Activated naive CD4-positive, alpha-beta T cell treated with anti-CD3 and anti-CD28 coated beads, Interleukin-2, amount 10 ng/mL, durations not matched to agents 7 days and 5 days (primary cell): ENCODE measurements at regions of chr16 and their contacts with region 1.

Region 1: DNA sequence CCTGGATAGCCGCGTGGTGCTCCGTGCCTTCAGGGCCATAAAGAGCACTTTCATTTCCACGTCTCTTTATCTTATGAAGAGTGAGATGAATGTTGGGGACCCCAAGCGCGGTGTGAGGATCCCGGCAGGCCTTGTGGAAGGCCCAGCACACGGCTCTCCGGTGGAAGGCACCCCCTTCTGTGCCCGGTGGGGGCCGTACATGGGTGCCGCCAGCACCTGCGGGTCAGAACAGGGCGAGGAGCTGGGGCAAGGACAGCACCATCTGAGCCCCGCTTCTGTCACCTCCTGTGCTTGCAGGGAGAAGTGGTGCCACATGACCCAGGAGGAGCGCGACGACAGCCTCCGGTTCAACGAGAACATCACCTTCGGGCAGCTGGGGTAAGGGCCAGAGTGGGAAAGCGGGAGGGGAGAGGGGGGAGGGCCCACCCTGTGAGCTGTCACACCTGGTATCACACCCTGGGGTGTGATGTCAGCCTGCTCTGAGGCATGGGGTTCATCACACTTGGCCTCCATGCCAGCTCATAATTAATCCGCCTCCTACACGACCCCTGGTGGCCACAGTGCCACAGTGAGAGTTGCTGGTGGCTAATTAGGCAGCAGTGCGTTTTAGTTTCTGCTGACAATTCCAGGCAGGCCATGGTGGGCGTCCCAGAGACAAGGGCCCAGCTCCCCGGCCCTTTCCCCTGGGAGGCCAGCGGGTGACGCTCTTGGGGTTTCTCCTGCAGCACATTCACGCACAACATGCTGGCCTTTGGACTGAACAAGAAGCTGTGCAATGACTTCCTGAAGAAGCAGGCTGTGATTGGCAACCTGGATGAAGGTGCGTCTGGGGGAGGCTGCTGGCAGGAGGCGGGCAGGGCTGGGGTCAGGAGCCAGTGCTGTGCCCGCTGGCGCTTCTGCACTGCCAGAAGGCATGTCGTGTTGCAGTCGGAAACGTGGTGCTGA is 25.7 kb downstream of the CIBAR2 start:
- DNase-seq: peak; percentile 87
- H3K4me3 Mint-ChIP-seq: no peak overlapping the region
- H3K27ac Mint-ChIP-seq: peak overlapping the region; percentile 33
- H3K4me1 Mint-ChIP-seq: peaks cover 22% of the 10 kb centered on the region
- H3K27me3 Mint-ChIP-seq: peaks cover 10% of the 10 kb centered on the region

Region 2: GRCh38 chr16:85027349-85027957 is 59.2 kb before region 1 on chr16 and contains the start of gene KIAA0513:
- CTCF ChIA-PET with region 1: interaction called, 23 read pairs
- DNase-seq: peak; percentile 96
- H3K4me3 Mint-ChIP-seq: peak within 1 kb of the TSS; percentile 87
- H3K27ac Mint-ChIP-seq: peak within 1 kb of the TSS; percentile 94
- H3K4me1 Mint-ChIP-seq: peaks cover 42% of the 10 kb centered on the region
- H3K27me3 Mint-ChIP-seq: peaks cover 3% of the 10 kb centered on the region

Region 3: DNA sequence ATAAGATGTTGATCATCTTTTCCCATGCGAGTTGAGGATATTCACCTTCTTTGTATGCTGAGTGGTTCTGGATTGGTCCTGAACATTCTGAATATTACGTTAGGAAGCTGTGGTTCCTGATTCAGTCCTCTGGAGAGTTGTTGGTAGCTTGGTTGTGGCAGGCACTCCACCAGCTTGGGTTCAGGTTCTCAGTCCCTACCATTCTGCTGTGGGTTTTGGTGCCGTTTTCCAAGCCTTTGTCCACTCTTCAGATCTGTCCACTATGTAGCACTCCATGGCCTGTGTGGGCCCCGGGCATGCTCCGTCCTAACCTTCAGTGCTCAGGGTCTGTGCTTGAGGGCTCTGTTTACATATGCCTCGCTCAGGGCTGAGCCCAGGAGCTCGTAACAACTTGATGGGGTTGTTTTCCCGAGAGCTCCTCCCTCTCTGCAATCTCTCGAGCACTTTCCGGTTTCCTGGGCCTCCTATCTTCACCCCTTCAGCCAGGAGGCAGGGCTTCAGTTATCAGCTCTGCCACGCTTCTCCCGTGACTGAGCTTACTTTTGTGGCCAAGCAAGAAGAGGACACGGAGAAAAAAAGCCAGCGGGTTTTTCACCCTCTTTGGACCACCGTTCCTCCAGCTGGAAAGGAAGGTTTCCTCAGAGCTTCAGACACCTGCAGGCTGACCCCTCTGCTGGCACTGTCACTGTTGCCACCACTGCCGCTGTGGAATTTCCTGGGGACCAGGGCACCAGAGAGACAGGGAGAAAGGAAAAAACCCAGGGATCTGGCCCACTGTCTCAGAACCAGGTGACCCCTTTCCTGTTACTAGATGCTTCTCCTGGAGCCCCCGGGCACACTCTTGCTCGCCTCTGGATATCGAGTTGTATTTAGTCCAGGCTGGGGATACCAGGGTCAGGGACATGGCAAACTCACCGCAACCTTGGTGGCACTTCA is 39.4 kb before region 1 on chr16:
- CTCF ChIA-PET with region 1: interaction called, 11 read pairs
- DNase-seq: peak; percentile 53
- H3K4me3 Mint-ChIP-seq: peak overlapping the region; percentile 24
- H3K27ac Mint-ChIP-seq: peak overlapping the region; percentile 77
- H3K4me1 Mint-ChIP-seq: peaks cover 20% of the 10 kb centered on the region
- H3K27me3 Mint-ChIP-seq: peaks cover 12% of the 10 kb centered on the region

Region 4: DNA sequence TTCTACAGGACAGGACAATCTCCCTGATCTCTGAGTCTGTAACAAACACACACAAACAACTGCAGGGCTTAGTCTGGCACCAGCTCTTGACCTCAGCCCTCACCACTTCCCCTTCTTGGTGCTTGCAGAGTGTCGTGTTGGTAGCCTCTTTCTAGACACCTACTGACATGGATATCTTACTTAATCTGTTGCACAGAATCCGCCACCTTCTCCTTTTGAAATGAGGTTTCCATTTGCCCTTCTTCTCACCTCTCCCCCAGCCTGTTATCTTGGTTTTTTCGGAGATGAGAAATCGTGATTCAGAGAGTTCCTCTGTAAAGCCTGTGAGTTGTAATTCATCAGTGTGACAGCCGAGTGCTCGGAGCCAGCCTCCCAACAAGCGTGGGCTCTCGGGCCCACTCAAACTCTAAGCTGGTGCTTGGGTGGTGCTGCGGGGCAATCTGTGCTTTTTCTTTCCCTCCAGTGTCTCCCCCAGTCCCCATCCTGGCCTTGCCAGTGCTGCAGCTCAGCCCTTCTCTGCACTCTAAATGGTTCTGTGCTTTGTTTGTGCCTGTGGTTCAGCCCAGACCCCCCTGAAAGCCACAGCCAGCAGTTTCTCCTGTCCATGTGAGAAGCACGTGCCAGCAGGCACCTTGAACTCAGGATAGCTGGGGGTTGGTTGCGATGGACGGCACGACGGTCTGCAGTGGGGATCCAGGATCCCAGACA is 31.0 kb before region 1 on chr16:
- CTCF ChIA-PET with region 1: interaction called, 22 read pairs
- DNase-seq: peak; percentile 91
- H3K4me3 Mint-ChIP-seq: peak overlapping the region; percentile 64
- H3K27ac Mint-ChIP-seq: peak overlapping the region; percentile 99
- H3K4me1 Mint-ChIP-seq: peaks cover 37% of the 10 kb centered on the region
- H3K27me3 Mint-ChIP-seq: peaks cover 4% of the 10 kb centered on the region

Region 5: GRCh38 chr16:85067015-85067414 is 19.6 kb before region 1 on chr16:
- CTCF ChIA-PET with region 1: no interaction called
- DNase-seq: no peak
- H3K4me3 Mint-ChIP-seq: no peak overlapping the region
- H3K27ac Mint-ChIP-seq: no peak overlapping the region
- H3K4me1 Mint-ChIP-seq: no peaks in the 10 kb centered on the region
- H3K27me3 Mint-ChIP-seq: no peaks in the 10 kb centered on the region